ENCODE measurements at regions of chr20 and their contacts with region 1.

Region 1: DNA sequence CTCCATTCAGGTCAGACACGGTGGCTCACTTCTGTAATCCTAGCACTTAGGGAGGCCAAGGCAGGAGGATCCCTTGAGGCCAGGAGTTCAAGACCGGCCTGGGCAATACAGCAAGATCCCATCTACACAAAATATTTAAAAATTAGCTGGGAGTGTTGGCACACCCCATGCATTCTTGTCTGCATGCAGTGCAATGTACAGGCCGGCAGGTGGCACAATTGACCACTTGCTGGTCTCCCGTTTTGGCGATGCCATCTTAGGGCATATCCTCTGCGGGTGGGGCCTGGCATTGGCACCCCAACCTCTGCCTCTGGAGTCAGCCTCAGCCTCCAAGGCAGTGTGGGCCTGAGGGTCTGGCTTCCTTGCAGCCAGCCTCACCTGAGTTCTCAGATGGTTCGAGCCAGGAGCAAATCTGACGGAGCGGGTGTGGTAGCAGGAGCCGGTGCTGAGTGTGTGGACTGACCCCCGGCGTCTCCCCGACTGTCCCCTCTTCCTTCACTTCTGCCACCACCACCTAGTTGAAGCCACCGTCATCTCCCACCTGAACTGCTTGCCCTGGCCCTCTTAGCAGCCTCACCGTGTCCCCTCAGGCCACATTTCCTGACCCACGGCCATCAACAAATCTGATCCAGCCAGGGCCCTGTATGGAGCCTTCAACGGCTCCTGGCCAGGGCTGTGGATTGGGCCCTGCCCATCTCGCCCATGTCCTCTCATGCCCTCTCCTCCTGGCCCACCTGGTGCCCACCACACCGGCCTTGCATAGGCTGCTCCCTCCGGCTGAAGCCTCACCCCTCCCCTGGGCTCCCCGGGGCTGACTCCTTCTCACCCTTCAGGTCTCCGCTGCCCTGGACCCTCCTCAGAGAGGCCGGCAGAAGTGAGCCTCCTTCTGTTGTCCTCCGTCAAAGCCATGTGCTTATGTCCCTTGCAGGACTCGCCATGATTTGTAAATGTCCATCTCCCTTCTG is 44.0 kb downstream of the EFCAB8 start:
- DNase-seq: peak; percentile 51
- ATAC-seq: peak; percentile 88
- H3K4me3 Mint-ChIP-seq: no peak overlapping the region
- H3K27ac Mint-ChIP-seq: no peak overlapping the region
- H3K4me1 Mint-ChIP-seq: no peaks in the 10 kb centered on the region
- H3K27me3 Mint-ChIP-seq: no peaks in the 10 kb centered on the region
- CTCF ChIP-seq: peak; percentile 77

Region 2: DNA sequence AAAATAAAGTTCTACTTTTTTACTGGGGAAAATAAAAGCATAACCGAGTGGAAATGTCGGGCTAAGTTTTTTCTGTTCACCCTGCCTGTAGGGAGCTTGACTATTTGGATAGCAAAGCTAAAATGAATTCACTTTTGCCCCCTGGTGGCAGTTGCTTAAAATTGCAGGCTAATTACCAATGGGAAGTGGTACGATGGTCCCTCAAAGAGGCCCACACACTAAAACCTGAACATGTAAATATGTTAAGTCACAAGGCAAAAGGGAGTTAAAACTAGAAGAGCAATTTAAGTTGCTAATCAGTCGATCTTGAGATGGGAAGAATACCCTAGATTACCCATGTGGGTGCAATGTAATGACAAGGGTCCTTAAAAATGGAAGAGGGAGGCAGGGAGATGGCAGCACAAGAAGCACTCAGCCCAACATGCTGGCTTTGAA is 102.4 kb after region 1 on chr20:
- CTCF ChIA-PET with region 1: interaction called, 14 read pairs
- POLR2A ChIA-PET with region 1: no interaction called
- intact Hi-C with region 1: loop called (anchors 1 kb)
- DNase-seq: no peak
- ATAC-seq: no peak
- H3K4me3 Mint-ChIP-seq: no peak overlapping the region
- H3K27ac Mint-ChIP-seq: no peak overlapping the region
- H3K4me1 Mint-ChIP-seq: peaks cover under 1% of the 10 kb centered on the region
- H3K27me3 Mint-ChIP-seq: no peaks in the 10 kb centered on the region
- CTCF ChIP-seq: no peak

Region 3: DNA sequence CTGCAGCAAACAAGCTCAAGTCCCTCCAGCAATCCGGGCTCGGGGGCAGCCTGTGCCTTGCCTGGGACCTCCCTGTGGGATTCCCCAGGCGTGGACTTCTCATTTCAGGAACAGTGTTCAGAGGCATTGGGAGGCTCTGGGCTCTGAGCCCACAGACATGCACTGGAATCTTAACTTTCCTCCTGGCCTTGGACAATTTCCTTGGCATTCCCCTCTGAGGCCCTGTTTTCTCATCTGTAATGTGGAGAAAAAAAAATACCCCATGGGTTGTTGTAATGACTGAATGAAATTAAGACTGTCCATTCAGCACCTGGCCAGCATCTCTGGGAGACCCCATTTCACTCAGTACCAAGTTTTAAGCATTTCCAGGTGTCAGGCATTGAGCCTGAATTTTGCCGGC is 194.3 kb after region 1 on chr20:
- CTCF ChIA-PET with region 1: interaction called, 23 read pairs
- POLR2A ChIA-PET with region 1: no interaction called
- intact Hi-C with region 1: loop called (anchors 1 kb)
- DNase-seq: no peak
- ATAC-seq: no peak
- H3K4me3 Mint-ChIP-seq: no peak overlapping the region
- H3K27ac Mint-ChIP-seq: no peak overlapping the region
- H3K4me1 Mint-ChIP-seq: no peaks in the 10 kb centered on the region
- H3K27me3 Mint-ChIP-seq: peaks cover 3% of the 10 kb centered on the region
- CTCF ChIP-seq: no peak

Region 4: DNA sequence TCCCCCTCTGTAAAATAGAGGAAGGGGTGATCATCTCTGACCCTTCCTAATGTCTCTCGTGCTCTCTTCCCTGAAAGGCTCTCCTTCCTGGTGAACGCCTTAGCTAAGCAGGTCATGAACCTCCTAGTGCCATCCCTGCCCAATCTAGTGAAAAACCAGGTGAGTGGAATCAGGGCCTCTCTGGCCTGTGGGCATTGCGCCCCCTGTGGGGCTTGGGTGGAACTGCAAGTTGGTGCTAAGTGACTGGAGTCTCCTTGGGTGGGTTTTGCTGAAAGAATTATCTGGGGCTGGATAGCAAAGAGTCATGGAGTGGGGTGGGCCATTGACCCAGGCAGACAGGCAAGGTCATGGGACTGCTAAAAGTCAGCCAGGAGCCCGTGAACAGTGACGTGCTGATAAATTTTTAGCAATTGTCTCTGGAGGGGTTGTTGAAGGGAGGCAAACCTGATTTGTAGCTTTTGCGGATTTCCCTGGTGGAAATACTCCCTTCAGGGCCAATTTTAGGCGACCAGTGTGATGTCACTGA is 389.2 kb after region 1 on chr20:
- CTCF ChIA-PET with region 1: interaction called, 9 read pairs
- POLR2A ChIA-PET with region 1: no interaction called
- intact Hi-C with region 1: loop called (anchors 1 kb)
- DNase-seq: peak; percentile 55
- ATAC-seq: peak; percentile 25
- H3K4me3 Mint-ChIP-seq: no peak overlapping the region
- H3K27ac Mint-ChIP-seq: no peak overlapping the region
- H3K4me1 Mint-ChIP-seq: no peaks in the 10 kb centered on the region
- H3K27me3 Mint-ChIP-seq: peaks cover 7% of the 10 kb centered on the region
- CTCF ChIP-seq: peak; percentile 50